Right ventricle myocardium superior (tissue), 1 donor: ENCODE measurements at regions of chr6 and their contacts with region 1.

Region 1: GRCh38 chr6:87929843-87930288 is 117.8 kb upstream of the SPACA1 start:
- DNase-seq: peak; percentile 87
- ATAC-seq: peak; percentile 98

Region 2: GRCh38 chr6:88492824-88493223 is 563.0 kb after region 1 on chr6:
- intact Hi-C with region 1: loop called (anchors 10 kb)
- DNase-seq: no peak
- ATAC-seq: peak; percentile 65

Region 3: DNA sequence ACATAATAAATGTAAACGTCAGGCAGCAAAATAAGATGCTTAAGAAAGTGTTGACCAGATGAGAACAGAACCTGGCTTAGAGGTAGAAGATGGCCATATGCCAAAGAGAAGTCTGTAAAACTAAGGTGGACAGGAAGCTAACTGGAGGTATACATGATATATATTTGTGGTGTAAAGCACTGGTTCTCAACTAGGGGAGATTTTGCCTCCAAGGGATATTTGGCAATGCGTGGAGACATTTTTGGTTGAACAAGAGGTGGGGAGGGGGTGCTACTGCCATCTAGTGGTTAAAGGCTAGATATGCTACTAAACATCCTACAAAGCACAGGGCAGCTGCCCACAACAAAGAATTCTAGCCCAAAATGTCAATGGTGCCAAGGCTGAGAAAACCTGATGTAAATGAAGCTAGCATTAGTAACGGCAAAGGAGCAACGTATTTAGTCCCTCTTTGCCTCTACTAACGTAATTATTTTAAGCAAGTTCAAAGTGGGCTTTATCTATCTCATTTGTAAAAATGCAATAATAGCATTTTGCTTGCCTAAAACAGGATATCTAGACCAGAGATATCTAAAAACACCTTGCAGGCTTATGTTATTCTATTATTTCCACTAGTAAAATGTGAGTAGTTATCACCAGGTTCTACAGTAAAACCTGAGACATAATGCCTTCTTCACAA is 851.0 kb after region 1 on chr6:
- intact Hi-C with region 1: loop called (anchors 10 kb)
- DNase-seq: no peak
- ATAC-seq: peak; percentile 79

Region 4: DNA sequence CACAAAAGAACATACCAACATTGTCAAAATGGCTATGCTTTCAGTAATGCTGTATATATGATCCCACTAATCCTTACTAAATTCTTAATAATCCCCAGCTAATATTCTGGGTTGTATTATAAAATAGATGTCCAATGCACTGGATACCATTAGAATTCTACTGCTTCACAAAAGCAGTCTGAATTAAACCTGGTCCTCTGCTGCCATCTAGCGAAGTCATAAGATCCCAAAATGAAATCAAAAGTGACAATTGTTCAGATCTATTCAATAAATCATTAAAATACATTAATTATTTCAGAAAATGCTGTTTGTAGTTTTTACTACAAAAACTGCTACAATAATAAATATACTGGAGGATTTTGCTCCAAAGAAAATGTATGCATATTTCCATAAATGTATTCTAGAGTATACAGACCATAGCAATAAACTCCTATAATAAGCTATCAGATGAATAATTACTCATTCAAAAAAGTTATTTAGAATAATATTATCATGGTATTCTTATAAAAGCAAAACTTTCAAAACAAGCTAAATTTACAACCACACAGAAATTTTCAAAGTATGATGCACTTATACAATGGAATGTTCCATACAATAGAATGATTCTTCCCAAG is 941.0 kb after region 1 on chr6:
- intact Hi-C with region 1: loop called (anchors 5 kb)
- DNase-seq: no peak
- ATAC-seq: peak; percentile 48